Testis (tissue), 5 donors: ENCODE measurements at regions of chr14 and their contacts with region 1.

Region 1: GRCh38 chr14:81273521-81273920 is 52.8 kb upstream of the GTF2A1 start:
- DNase-seq: no peak
- H3K4me3 ChIP-seq: no peak overlapping the region
- H3K27ac ChIP-seq: peak overlapping the region in 1 of 2 donors; percentile 56
- H3K4me1 ChIP-seq: peaks cover 6% of the 10 kb centered on the region
- H3K27me3 ChIP-seq: no peaks in the 10 kb centered on the region
- CTCF ChIP-seq: no peak
- POLR2A ChIP-seq: no peak

Region 2: GRCh38 chr14:81453166-81453766 is 179.7 kb after region 1 on chr14:
- intact Hi-C with region 1: loop called (anchors 5 kb)
- DNase-seq: peak; percentile 69
- H3K4me3 ChIP-seq: no peak overlapping the region
- H3K27ac ChIP-seq: no peak overlapping the region
- H3K4me1 ChIP-seq: peaks cover 20% of the 10 kb centered on the region
- H3K27me3 ChIP-seq: no peaks in the 10 kb centered on the region
- CTCF ChIP-seq: peak; percentile 89 to 94 (median 93)
- POLR2A ChIP-seq: no peak